AG04450 (cell line): ENCODE measurements at regions of chr13 and their contacts with region 1.

Region 1: GRCh38 chr13:45047394-45048310 is 58.3 kb downstream of the GPALPP1 start:
- DNase-seq: peak; percentile 74
- H3K4me3 ChIP-seq: peak overlapping the region; percentile 57
- H3K27ac ChIP-seq: no peak overlapping the region
- H3K27me3 ChIP-seq: no peaks in the 10 kb centered on the region
- CTCF ChIP-seq: peak; percentile 93

Region 2: GRCh38 chr13:44969551-44970484 is 77.8 kb before region 1 on chr13:
- CTCF ChIA-PET with region 1: interaction called, 13 read pairs
- POLR2A ChIA-PET with region 1: no interaction called
- DNase-seq: peak; percentile 34
- H3K4me3 ChIP-seq: no peak overlapping the region
- H3K27ac ChIP-seq: no peak overlapping the region
- H3K27me3 ChIP-seq: no peaks in the 10 kb centered on the region
- CTCF ChIP-seq: peak; percentile 73

Region 3: DNA sequence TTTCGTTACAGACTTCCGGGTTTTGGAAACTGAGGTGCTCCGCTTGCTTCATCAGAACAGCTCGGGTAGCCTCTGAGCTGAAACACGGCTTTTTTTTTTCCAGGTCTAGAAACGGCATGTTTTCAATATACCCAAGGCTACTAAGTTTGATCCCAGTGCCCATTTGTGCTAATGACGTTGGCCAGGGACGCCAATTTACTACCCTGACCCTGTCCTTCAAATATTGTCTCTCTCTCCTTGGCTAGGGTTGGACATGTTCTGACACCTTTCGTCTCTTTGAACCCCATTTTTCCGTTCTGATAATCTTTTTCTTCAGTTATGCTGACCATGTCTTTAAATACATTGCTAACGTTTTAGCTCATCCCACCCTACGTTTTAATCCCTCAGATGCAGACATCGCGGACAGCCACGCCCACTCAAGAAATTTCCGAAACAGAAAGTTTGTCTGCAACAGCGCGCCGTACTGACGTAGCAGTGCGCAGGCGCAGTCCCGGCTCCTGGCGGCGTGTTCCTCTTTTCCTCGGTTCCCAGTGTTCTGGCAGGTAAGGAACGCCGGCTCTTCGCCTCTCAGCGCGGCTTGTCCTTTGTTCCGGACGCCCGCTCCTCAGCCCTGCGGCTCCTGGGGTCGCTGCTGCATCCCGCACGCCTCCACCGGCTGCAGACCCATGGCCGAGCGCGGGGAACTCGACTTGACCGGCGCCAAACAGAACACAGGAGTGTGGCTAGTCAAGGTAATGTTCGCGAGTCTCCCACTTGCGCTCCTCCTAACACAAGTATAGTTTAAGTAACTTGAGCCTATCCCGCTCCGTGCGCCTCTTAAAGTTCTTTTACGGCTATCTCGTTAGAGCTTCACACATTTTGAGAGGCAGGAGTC is 72.6 kb after region 1 on chr13 and contains the start of gene GTF2F2:
- CTCF ChIA-PET with region 1: interaction called, 10 read pairs
- POLR2A ChIA-PET with region 1: no interaction called
- DNase-seq: peak; percentile 82
- H3K4me3 ChIP-seq: peak within 1 kb of the TSS; percentile 96
- H3K27ac ChIP-seq: peak within 1 kb of the TSS; percentile 91
- H3K27me3 ChIP-seq: no peaks in the 10 kb centered on the region
- CTCF ChIP-seq: no peak
- polyA plus RNA-seq, gene GTF2F2: 30.7 and 44.3 TPM in 2 replicates

Region 4: DNA sequence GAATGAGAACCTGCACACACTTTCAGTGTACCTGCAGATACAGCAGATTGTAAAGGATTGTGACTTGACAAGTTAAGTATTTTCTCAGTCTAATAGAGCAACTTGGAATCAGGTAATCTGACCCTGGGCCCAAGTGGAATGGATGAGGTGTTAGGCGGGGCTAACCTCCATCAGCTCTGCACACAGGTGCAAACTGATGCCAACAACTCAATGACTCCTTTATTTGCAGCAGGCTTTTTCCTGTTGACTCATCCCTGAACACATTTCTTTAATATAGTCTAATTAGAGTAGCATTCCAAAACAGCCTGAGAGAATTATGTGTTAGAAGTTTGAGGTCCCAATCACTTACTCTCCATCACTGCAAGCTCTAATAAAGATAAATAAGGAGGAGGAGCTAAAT is 244.5 kb after region 1 on chr13:
- CTCF ChIA-PET with region 1: interaction called, 18 read pairs
- POLR2A ChIA-PET with region 1: no interaction called
- DNase-seq: no peak
- H3K4me3 ChIP-seq: no peak overlapping the region
- H3K27ac ChIP-seq: no peak overlapping the region
- H3K27me3 ChIP-seq: no peaks in the 10 kb centered on the region
- CTCF ChIP-seq: no peak

Region 5: DNA sequence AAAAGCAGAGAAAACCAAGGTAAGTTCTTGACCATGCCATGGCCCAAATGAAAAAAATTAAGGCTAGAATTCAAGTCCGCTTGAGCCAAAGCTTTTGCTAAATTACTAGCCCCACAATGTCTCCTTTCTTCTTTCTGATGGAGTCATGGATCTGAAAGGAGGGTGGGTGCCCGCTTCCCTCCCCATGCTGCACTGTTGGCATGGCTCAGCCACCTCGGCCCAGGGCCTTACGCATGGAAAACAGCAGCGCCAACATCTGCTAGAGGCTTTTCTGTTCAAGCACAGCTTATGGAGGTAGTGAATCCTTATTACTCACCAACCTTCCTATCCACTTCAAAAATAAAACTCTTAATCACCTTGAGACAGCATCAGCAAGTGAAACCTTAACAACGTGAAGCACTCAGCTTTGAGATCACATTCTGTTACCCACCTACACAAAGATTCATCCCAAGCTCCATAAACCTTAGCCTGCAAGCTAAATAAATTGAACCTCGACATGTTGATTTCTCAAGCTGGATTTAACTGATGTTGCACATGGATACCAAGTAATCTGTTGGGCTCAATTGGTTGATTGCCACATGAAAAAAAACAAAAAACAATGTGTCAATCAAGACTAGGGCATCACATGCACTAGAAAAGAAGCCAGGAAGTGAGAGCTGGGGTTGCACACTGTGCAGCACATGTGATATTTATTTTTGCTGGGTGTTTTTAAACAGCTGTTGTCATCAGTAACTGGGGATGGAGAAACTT is 250.0 kb after region 1 on chr13:
- CTCF ChIA-PET with region 1: interaction called, 18 read pairs
- POLR2A ChIA-PET with region 1: no interaction called
- DNase-seq: no peak
- H3K4me3 ChIP-seq: no peak overlapping the region
- H3K27ac ChIP-seq: no peak overlapping the region
- H3K27me3 ChIP-seq: no peaks in the 10 kb centered on the region
- CTCF ChIP-seq: no peak

Region 6: GRCh38 chr13:45310341-45311125 is 262.9 kb after region 1 on chr13:
- CTCF ChIA-PET with region 1: interaction called, 74 read pairs
- POLR2A ChIA-PET with region 1: no interaction called
- DNase-seq: no peak
- H3K4me3 ChIP-seq: no peak overlapping the region
- H3K27ac ChIP-seq: no peak overlapping the region
- H3K27me3 ChIP-seq: no peaks in the 10 kb centered on the region
- CTCF ChIP-seq: no peak

Region 7: DNA sequence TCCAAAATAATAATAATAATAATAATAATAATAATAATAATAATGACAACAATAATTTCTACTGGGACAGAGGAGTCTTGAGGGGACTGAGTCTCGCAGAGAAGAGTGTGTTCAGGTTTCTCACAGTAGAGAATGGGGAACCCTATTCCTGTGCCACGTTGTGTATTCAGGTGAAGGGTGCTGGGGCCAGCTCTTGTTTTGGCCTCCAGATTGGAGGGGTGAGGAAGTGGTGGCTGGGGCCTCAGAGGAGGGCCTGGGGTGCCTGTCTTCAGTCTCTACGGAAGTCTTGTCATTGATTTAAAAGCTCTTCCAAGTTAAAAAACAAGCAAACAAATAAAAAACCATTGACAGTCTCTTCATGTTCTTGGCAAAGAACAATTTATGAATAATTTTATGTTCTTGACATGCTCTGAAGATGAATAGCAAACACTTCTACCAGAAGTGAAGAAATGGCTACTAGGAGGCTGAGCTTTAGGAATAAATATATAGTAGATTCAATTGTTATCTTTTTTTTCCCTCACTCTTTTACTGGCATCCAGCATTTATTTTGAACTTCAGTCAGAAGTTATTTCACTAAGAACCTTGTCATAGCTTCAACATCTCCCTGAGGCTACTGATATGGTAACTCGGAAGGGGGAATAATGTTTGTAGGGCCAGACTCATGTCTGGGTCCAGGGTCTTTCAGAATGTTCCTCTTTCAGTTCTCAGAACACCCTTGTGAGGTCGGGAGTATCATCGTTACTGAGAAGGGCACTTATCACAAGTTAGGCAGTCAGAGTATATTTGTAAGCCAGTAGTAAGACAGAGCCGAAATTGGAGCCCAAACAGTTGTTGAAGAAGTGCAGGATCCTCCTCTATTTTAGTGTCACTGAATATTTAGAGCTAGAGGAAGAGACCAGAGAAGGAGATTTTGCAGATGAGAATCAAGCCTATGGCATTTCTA is 1518.4 kb after region 1 on chr13:
- CTCF ChIA-PET with region 1: interaction called, 10 read pairs
- POLR2A ChIA-PET with region 1: no interaction called
- DNase-seq: no peak
- H3K4me3 ChIP-seq: no peak overlapping the region
- H3K27ac ChIP-seq: no peak overlapping the region
- H3K27me3 ChIP-seq: no peaks in the 10 kb centered on the region
- CTCF ChIP-seq: no peak